ENCODE measurements at regions of chr1 and their contacts with region 1.

Region 1: GRCh38 chr1:54781023-54781723 is 16.9 kb upstream of the PARS2 start:
- DNase-seq: peak; percentile 33 to 78
- H3K4me3 ChIP-seq: peak overlapping the region; percentile 3 to 51 (median 24); a peak in 6 of 8 replicates
- H3K27ac ChIP-seq: no peak overlapping the region
- H3K4me1 ChIP-seq: no peaks in the 10 kb centered on the region; a peak in 1 of 7 replicates
- H3K27me3 ChIP-seq: peaks cover 15 to 26% (median 25%) of the 10 kb centered on the region in 4 experiments; a peak in 6 of 7 replicates
- CTCF ChIP-seq: no peak
- EP300 ChIP-seq: no peak
- POLR2A ChIP-seq: no peak
- RAD21 ChIP-seq: no peak

Region 2: DNA sequence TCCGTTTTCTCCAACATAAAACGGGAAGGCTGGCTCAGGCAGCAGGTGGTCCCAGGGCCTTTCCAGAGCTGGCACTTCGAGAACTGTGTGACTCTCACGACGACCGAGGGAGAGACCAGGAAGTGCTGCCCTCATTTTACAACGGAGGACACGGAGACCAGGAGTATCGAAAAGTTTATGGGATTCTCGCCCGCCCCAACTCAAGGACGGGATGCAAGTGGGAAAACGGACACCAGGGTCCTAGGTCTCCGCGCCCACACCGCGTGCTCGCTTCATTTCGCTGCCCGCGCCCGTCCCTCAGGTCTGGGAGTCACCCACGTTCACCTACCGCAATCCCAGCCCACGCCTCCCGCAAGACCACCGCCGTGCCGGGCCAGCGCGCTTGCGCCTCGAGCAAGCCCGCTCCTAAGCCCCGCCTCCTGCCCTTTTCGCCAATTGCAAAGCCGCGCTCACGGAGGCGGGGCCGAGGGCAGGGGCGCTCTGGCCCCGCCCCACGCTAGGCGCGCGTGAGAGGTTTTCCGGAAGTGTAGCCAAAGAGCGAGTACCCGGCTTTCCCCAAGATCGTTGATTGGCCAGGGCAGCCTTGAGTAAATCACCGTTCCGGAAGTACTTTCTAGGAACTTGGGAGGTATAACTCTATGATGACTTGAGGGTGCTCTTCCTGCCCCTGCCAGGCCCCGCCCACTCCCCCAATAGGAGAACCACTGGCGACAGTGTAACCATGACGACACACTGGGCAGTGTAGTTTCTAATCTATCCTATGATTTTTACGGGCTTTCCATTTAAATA is 16.8 kb before region 1 on chr1 and contains the start of gene PARS2:
- CTCF ChIA-PET with region 1: interaction called, 14 read pairs
- POLR2A ChIA-PET with region 1: interaction called, 5 read pairs
- DNase-seq: peak; percentile 95 to 97
- H3K4me3 ChIP-seq: peak within 1 kb of the TSS; percentile 71 to 93 (median 84)
- H3K27ac ChIP-seq: peak within 1 kb of the TSS; percentile 70
- H3K4me1 ChIP-seq: no peaks in the 10 kb centered on the region; a peak in 2 of 7 replicates
- H3K27me3 ChIP-seq: no peaks in the 10 kb centered on the region
- CTCF ChIP-seq: peak in 1 of 3 experiments; percentile 9; a peak in 1 of 4 replicates
- EP300 ChIP-seq: no peak
- POLR2A ChIP-seq: peak; percentile 77 to 96
- RAD21 ChIP-seq: no peak; a peak in 1 of 4 replicates
- total RNA-seq, gene PARS2: 10.0 and 10.4 TPM in 2 replicates

Region 3: DNA sequence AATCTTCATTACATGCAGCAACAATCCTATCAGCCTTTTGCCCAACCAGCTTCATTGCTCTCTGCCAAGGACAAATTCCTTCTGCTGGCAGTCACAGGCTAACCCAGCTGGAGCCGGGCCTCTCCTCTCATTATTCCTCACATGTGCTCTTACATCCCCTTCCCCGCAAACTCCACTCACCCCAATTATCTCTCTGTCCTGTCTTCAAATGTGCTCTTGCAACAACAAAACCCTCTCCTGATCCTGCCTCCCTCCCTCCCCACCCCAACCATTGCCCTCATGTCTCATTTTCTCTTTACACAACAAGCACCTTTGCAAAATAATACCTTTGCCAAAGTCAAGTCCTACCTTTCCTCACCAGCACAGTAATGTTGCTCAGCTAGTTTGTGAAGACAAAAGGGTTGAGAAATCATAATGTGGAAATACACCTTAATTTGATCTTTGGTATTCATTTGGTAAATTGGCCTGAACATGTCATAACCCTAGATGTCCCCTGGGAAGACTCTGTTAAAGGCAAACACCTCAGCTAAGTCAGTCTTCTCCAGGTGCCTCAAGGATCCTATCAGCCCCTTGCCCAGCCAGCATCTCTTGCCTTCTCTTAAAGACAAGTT is 141.9 kb after region 1 on chr1:
- CTCF ChIA-PET with region 1: no interaction called
- POLR2A ChIA-PET with region 1: no interaction called
- DNase-seq: no peak
- H3K4me3 ChIP-seq: no peak overlapping the region
- H3K27ac ChIP-seq: no peak overlapping the region
- H3K4me1 ChIP-seq: no peaks in the 10 kb centered on the region
- H3K27me3 ChIP-seq: no peaks in the 10 kb centered on the region
- CTCF ChIP-seq: no peak
- EP300 ChIP-seq: no peak
- POLR2A ChIP-seq: no peak
- RAD21 ChIP-seq: no peak

Region 4: GRCh38 chr1:54934869-54935268 is 153.7 kb after region 1 on chr1:
- CTCF ChIA-PET with region 1: no interaction called
- POLR2A ChIA-PET with region 1: no interaction called
- DNase-seq: no peak
- H3K4me3 ChIP-seq: no peak overlapping the region
- H3K27ac ChIP-seq: no peak overlapping the region
- H3K4me1 ChIP-seq: peaks cover 0 to 4% (median 2%) of the 10 kb centered on the region in 4 experiments; a peak in 3 of 7 replicates
- H3K27me3 ChIP-seq: no peaks in the 10 kb centered on the region
- CTCF ChIP-seq: no peak
- EP300 ChIP-seq: no peak
- POLR2A ChIP-seq: no peak
- RAD21 ChIP-seq: no peak